Endothelial cell of umbilical vein (primary cell): ENCODE measurements at regions of chr6 and their contacts with region 1.

Region 1: GRCh38 chr6:34055223-34055933 is 90.5 kb downstream of the GRM4 start:
- DNase-seq: peak; percentile 61
- H3K4me3 ChIP-seq: no peak overlapping the region
- H3K27ac ChIP-seq: no peak overlapping the region
- H3K4me1 ChIP-seq: no peaks in the 10 kb centered on the region
- H3K27me3 ChIP-seq: peaks cover 0 to 1% of the 10 kb centered on the region in 2 experiments
- CTCF ChIP-seq: peak; percentile 71 to 97
- POLR2A ChIP-seq: no peak

Region 2: DNA sequence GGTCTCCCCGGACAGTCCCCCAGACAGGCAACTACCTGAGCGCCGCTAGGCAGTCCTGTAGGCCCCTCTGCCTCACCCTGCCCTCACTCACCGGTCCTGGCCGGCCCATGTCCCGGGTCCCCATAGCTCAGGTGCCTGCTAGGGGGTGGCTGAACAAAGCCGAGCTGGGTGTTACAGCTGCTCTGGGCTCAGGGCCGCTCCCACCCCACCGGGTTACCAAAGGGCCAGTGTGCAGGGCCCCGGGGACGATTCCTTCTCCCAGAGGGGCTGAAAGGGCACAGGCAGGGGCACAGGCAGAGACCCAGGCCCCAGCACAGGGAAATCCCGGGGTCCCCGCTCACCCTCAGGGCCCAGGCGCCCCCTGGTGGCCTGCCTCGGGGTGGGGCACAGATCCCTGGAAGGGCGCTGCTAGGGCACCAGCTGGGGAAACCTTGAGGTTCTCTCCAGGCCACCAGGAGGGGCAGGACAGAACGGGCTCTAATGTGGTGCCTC is 27.9 kb before region 1 on chr6:
- CTCF ChIA-PET with region 1: interaction called, 13 read pairs
- POLR2A ChIA-PET with region 1: no interaction called
- dilution Hi-C with region 1: no loop called
- intact Hi-C with region 1: no loop called
- DNase-seq: peak; percentile 7
- H3K4me3 ChIP-seq: no peak overlapping the region
- H3K27ac ChIP-seq: no peak overlapping the region
- H3K4me1 ChIP-seq: no peaks in the 10 kb centered on the region
- H3K27me3 ChIP-seq: no peaks in the 10 kb centered on the region
- CTCF ChIP-seq: peak; percentile 74 to 90
- POLR2A ChIP-seq: no peak

Region 3: GRCh38 chr6:34067814-34068213 is 12.4 kb after region 1 on chr6:
- CTCF ChIA-PET with region 1: interaction called, 27 read pairs
- POLR2A ChIA-PET with region 1: no interaction called
- dilution Hi-C with region 1: no loop called
- intact Hi-C with region 1: no loop called
- DNase-seq: no peak
- H3K4me3 ChIP-seq: no peak overlapping the region
- H3K27ac ChIP-seq: no peak overlapping the region
- H3K4me1 ChIP-seq: no peaks in the 10 kb centered on the region
- H3K27me3 ChIP-seq: no peaks in the 10 kb centered on the region
- CTCF ChIP-seq: no peak
- POLR2A ChIP-seq: no peak

Region 4: GRCh38 chr6:34145161-34146020 is 90.0 kb after region 1 on chr6:
- CTCF ChIA-PET with region 1: interaction called, 245 read pairs
- POLR2A ChIA-PET with region 1: no interaction called
- dilution Hi-C with region 1: no loop called
- intact Hi-C with region 1: no loop called
- DNase-seq: peak; percentile 25
- H3K4me3 ChIP-seq: peak overlapping the region in 1 of 3 experiments; percentile 13
- H3K27ac ChIP-seq: no peak overlapping the region
- H3K4me1 ChIP-seq: no peaks in the 10 kb centered on the region
- H3K27me3 ChIP-seq: peaks cover 62 to 63% of the 10 kb centered on the region in 2 experiments
- CTCF ChIP-seq: no peak
- POLR2A ChIP-seq: no peak

Region 5: DNA sequence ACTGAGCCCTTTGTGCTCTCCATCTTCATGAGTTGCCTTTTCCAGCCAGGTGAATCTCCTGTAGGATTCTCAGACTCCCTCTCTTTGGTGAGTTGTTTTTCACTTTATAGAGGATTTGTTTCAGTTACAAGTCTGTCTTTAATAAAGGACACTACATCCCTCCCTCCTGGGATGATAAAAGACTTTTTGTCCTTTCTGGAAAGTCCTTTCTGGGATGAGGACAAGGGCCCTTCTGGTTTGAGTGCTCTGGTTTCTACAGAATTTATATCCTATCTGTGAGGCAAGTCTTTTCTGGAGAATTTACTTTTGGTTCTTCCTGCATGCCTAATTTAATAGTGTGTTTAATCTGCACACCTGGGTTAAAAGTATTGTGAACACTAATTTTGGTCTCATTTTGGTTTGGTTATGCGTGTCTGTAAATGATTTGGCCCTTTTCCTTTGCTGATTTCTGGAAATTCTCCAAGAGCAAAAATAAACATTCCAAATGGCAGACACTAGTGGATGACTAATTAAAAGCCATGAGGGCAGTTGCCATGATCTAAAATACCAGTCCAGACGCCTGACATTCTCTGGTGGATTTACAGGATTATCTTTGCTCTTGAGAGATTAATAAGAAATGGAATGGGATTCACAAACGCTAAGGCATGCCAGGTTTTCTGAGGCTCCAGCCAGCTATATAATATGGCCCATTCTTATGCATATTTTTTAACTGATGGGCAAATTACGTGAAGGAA is 1040.9 kb after region 1 on chr6:
- CTCF ChIA-PET with region 1: no interaction called
- POLR2A ChIA-PET with region 1: no interaction called
- dilution Hi-C with region 1: no loop called
- intact Hi-C with region 1: no loop called
- DNase-seq: peak; percentile 84
- H3K4me3 ChIP-seq: no peak overlapping the region
- H3K27ac ChIP-seq: peak overlapping the region; percentile 42
- H3K4me1 ChIP-seq: peaks cover 12% of the 10 kb centered on the region
- H3K27me3 ChIP-seq: no peaks in the 10 kb centered on the region
- CTCF ChIP-seq: no peak
- POLR2A ChIP-seq: no peak